Right lobe of liver (tissue), 6 donors: ENCODE measurements at regions of chr3 and their contacts with region 1.

Region 1: GRCh38 chr3:128170805-128171516 is 17.7 kb downstream of the EEFSEC start:
- DNase-seq: peak in 2 of 3 donors; percentile 55 to 68
- ATAC-seq: peak; percentile 81 to 89 (median 83)
- H3K4me3 ChIP-seq: no peak overlapping the region
- H3K27ac ChIP-seq: no peak overlapping the region
- H3K4me1 ChIP-seq: peaks cover 0 to 40% (median 22%) of the 10 kb centered on the region in 4 donors
- H3K27me3 ChIP-seq: no peaks in the 10 kb centered on the region
- CTCF ChIP-seq: peak; percentile 76 to 82 (median 80)
- POLR2A ChIP-seq: no peak

Region 2: DNA sequence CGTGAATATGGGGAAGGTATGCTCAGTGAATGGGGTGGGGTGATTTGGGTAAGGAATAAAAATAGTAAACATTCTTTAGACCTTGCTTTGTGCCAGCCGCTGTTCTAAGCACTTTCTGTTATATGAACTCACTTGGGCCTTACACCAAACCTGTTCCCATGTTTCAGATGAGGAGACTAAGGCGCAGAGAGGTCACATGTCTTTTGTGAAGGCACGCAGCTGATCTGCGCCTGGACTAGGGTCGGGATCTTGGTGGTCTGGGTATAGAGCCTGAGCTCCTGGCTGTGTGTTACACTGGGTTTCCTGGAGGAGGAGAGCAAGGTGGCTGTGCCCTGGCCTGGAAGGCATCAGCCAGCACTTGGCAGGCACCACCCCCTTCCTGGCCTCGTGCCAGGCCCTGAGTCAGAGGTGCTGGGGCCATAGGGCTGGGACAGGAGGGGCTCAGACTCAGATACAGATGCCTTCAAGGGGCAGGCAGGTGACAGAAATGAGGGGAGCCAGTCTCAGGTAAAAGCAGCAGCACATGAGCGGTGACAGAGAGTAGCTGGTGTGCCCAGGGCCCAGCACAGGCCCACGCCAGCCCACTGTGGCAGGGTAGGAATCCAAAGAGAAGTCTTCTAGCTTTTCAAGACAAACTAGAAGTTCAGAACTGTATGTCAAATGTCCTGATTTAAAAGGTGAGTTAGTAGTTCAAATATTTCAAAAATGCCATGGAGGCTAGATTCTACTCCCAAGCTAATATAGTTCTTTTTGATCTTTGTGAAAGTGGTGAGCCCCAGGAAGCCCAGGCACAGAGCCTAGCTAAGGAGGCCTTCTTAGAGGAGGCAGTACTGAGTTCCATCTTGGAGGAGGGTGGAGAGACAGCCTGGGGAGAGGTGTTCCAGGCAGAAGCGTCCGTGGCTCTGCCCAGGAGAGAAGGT is 212.6 kb after region 1 on chr3:
- intact Hi-C with region 1: loop called in 1 of 2 experiments (anchors 10 kb)
- DNase-seq: peak in 2 of 3 donors; percentile 62 to 72
- ATAC-seq: peak in 2 of 4 donors; percentile 30 to 31
- H3K4me3 ChIP-seq: no peak overlapping the region
- H3K27ac ChIP-seq: no peak overlapping the region
- H3K4me1 ChIP-seq: peaks cover 0 to 49% (median 22%) of the 10 kb centered on the region in 4 donors
- H3K27me3 ChIP-seq: no peaks in the 10 kb centered on the region
- CTCF ChIP-seq: no peak
- POLR2A ChIP-seq: no peak